Endothelial cell of umbilical vein (primary cell): ENCODE measurements at regions of chr15 and their contacts with region 1.

Region 1: DNA sequence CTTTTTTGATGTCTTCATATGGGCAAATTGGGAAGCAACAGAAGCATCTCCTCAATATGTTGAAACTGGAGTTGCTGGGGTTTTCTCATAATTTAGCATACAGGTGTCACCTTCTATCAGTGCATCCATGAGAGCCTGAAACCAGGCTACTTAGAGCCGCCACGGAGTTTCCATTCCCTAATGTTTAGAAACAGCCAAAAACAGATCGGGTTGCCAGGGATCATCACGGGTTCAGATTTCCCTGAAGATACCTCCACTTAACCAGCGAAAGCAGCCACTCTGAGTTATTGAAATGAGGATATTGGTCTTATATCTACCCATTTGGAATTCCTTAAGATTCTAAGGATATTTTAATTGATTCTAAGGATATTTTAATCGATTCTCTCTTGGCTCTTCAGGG is 14.5 kb downstream of the TERB2 start:
- DNase-seq: no peak
- H3K4me3 ChIP-seq: no peak overlapping the region
- H3K27ac ChIP-seq: no peak overlapping the region
- H3K4me1 ChIP-seq: no peaks in the 10 kb centered on the region
- H3K27me3 ChIP-seq: no peaks in the 10 kb centered on the region
- CTCF ChIP-seq: no peak
- POLR2A ChIP-seq: no peak

Region 2: GRCh38 chr15:44999105-44999504 is 28.1 kb after region 1 on chr15:
- CTCF ChIA-PET with region 1: no interaction called
- POLR2A ChIA-PET with region 1: no interaction called
- dilution Hi-C with region 1: no loop called
- intact Hi-C with region 1: no loop called
- DNase-seq: no peak
- H3K4me3 ChIP-seq: no peak overlapping the region
- H3K27ac ChIP-seq: no peak overlapping the region
- H3K4me1 ChIP-seq: no peaks in the 10 kb centered on the region
- H3K27me3 ChIP-seq: peaks cover 9% of the 10 kb centered on the region in 2 experiments
- CTCF ChIP-seq: no peak
- POLR2A ChIP-seq: no peak

Region 3: DNA sequence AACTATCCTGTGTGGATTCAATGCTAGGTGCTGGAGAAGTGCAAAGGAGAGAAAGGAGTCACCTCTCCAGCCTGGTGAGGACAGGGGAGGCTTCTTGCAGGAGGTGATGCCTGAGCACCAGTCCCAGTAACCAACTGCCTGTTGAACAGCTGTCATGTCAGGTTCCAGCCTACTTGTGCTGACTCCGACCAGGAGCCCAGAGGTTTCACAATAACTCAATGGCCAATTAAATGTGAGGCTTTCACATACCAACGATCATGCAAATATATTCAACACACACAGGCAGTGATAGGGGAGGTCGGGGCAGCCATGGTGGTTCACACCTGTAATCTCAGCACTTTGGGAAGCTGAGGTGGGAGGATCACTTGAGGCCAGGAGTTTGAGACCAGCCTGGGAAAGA is 59.7 kb after region 1 on chr15:
- CTCF ChIA-PET with region 1: interaction called, 62 read pairs
- POLR2A ChIA-PET with region 1: no interaction called
- dilution Hi-C with region 1: no loop called
- intact Hi-C with region 1: no loop called
- DNase-seq: no peak
- H3K4me3 ChIP-seq: no peak overlapping the region
- H3K27ac ChIP-seq: no peak overlapping the region
- H3K4me1 ChIP-seq: peaks cover 13% of the 10 kb centered on the region
- H3K27me3 ChIP-seq: no peaks in the 10 kb centered on the region
- CTCF ChIP-seq: no peak
- POLR2A ChIP-seq: no peak